BJ (cell line): ENCODE measurements at regions of chr2 and their contacts with region 1.

Region 1: DNA sequence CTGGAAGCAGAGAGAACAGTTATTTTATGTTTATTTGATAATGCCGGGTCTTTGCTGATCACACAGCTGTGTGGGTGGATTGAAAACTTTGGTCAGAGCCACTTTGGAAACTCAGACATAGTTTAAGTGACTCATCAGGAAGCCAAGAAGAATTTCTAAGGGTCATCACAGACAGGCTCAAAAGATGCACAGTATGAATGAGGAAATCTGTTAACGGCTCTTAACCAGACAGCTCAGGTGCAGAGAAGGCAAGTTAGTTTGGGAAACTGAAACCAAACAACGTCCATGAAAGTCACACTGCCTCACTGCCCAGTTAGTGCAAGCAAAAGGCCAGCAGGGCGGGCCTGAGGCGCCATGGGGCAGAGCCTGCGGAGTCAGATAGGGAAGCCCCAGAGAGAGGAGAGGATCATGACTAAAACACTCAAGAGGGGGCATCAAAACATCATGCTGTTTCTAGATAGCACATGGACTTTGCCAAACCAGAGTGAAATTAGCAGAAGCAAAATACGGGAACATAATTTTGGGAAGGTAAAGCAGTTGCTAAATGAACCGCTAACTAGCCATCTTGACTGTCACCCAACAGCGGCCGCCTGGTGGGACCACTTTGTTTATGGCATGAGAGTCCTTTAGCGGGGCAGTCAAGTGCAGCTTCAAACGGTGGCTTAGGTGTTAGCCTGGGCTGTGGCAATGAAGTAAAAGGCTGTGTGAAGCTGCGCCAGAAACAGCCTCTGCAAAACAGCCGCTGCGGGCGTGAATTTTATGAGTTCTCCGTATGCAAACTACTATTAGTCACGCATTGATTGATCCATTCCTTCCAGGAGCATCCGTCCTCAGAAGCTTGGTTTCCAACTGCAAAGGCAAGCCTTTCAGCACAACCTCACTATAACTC is 101.2 kb downstream of the KCTD18 start:
- DNase-seq: peak; percentile 59
- H3K4me3 ChIP-seq: no peak overlapping the region
- H3K27me3 ChIP-seq: no peaks in the 10 kb centered on the region
- CTCF ChIP-seq: 0 out of 2 replicates have a peak, but pooled peaks have one; percentile 3

Region 2: GRCh38 chr2:200454927-200455801 is 46.5 kb after region 1 on chr2:
- CTCF ChIA-PET with region 1: interaction called, 10 read pairs
- POLR2A ChIA-PET with region 1: no interaction called
- DNase-seq: no peak
- H3K4me3 ChIP-seq: no peak overlapping the region
- H3K27me3 ChIP-seq: no peaks in the 10 kb centered on the region
- CTCF ChIP-seq: no peak